Heart right ventricle (tissue), 16 donors: ENCODE measurements at regions of chr9 and their contacts with region 1.

Region 1: GRCh38 chr9:36258208-36258988 is at the start of gene GNE:
- DNase-seq: peak; percentile 99
- ATAC-seq: peak; percentile 98 to 99 (median 99)
- H3K4me3 ChIP-seq: peak within 1 kb of the TSS; percentile 66 to 99 (median 90)
- H3K27ac ChIP-seq: peak within 1 kb of the TSS; percentile 87 to 99 (median 98)
- H3K4me1 ChIP-seq: peaks cover 0 to 18% (median 11%) of the 10 kb centered on the region in 9 donors
- H3K27me3 ChIP-seq: no peaks in the 10 kb centered on the region
- CTCF ChIP-seq: peak in 1 of 9 donors; percentile 5
- total RNA-seq, gene GNE: 10.1 to 14.9 (median 12.5) TPM

Region 2: GRCh38 chr9:36204906-36205547 is 53.4 kb before region 1 on chr9:
- intact Hi-C with region 1: loop called in 1 of 10 experiments (anchors 10 kb)
- DNase-seq: no peak
- ATAC-seq: peak; percentile 17 to 85 (median 72)
- H3K4me3 ChIP-seq: no peak overlapping the region
- H3K27ac ChIP-seq: peak overlapping the region in 5 of 10 donors; percentile 8 to 54 (median 32)
- H3K4me1 ChIP-seq: peaks cover 0 to 53% (median 43%) of the 10 kb centered on the region in 9 donors
- H3K27me3 ChIP-seq: no peaks in the 10 kb centered on the region
- CTCF ChIP-seq: peak in 6 of 9 donors; percentile 19 to 47 (median 36)